ENCODE measurements at regions of chr11 and their contacts with region 1.

Region 1: GRCh38 chr11:3732671-3733436 is 61.7 kb upstream of the CHRNA10 start:
- DNase-seq: no peak
- ATAC-seq: no peak
- H3K4me3 ChIP-seq: no peak overlapping the region
- H3K4me3 Mint-ChIP-seq: no peak overlapping the region
- H3K27ac ChIP-seq: no peak overlapping the region
- H3K27ac Mint-ChIP-seq: peak overlapping the region; percentile 56
- H3K4me1 ChIP-seq: no peaks in the 10 kb centered on the region
- H3K4me1 Mint-ChIP-seq: peaks cover 6% of the 10 kb centered on the region
- H3K27me3 ChIP-seq: no peaks in the 10 kb centered on the region
- H3K27me3 Mint-ChIP-seq: no peaks in the 10 kb centered on the region
- CTCF ChIP-seq: no peak

Region 2: DNA sequence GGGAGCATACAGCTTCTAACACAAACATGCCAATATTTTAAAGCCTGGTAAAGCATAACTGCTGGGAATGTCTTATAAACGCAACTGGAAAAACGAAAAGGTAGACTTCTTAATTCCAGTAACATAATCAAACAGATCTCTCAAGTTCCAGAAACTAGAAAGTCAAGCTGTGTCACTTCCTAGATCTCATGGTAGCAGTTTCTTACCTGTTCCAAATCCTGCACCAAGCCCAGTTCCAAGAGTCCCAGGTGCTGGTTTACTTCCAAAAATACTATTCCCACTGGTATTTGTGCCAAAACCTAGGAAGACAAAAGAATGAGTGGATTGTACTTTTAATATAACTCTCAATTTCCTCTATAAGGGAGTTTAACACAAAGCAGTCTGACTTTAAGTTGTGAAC is 20.3 kb after region 1 on chr11:
- CTCF ChIA-PET with region 1: no interaction called
- POLR2A ChIA-PET with region 1: no interaction called
- intact Hi-C with region 1: no loop called
- DNase-seq: no peak
- ATAC-seq: no peak
- H3K4me3 ChIP-seq: no peak overlapping the region
- H3K4me3 Mint-ChIP-seq: no peak overlapping the region
- H3K27ac ChIP-seq: no peak overlapping the region
- H3K27ac Mint-ChIP-seq: no peak overlapping the region
- H3K4me1 ChIP-seq: no peaks in the 10 kb centered on the region
- H3K4me1 Mint-ChIP-seq: no peaks in the 10 kb centered on the region
- H3K27me3 ChIP-seq: no peaks in the 10 kb centered on the region
- H3K27me3 Mint-ChIP-seq: no peaks in the 10 kb centered on the region
- CTCF ChIP-seq: no peak

Region 3: GRCh38 chr11:3767536-3767935 is 34.7 kb after region 1 on chr11:
- CTCF ChIA-PET with region 1: no interaction called
- POLR2A ChIA-PET with region 1: no interaction called
- intact Hi-C with region 1: loop called in 1 of 2 experiments (anchors 5 kb)
- DNase-seq: no peak
- ATAC-seq: no peak
- H3K4me3 ChIP-seq: no peak overlapping the region
- H3K4me3 Mint-ChIP-seq: no peak overlapping the region
- H3K27ac ChIP-seq: no peak overlapping the region
- H3K27ac Mint-ChIP-seq: no peak overlapping the region
- H3K4me1 ChIP-seq: no peaks in the 10 kb centered on the region
- H3K4me1 Mint-ChIP-seq: no peaks in the 10 kb centered on the region
- H3K27me3 ChIP-seq: no peaks in the 10 kb centered on the region
- H3K27me3 Mint-ChIP-seq: no peaks in the 10 kb centered on the region
- CTCF ChIP-seq: no peak